Ovary (tissue), 10 donors: ENCODE measurements at regions of chr17 and their contacts with region 1.

Region 1: GRCh38 chr17:62911114-62911513 is 54.9 kb upstream of the TANC2 start:
- DNase-seq: no peak
- H3K4me3 ChIP-seq: no peak overlapping the region
- H3K27ac ChIP-seq: no peak overlapping the region
- H3K4me1 ChIP-seq: no peaks in the 10 kb centered on the region
- H3K27me3 ChIP-seq: no peaks in the 10 kb centered on the region
- CTCF ChIP-seq: no peak
- EP300 ChIP-seq: no peak
- POLR2A ChIP-seq: no peak

Region 2: DNA sequence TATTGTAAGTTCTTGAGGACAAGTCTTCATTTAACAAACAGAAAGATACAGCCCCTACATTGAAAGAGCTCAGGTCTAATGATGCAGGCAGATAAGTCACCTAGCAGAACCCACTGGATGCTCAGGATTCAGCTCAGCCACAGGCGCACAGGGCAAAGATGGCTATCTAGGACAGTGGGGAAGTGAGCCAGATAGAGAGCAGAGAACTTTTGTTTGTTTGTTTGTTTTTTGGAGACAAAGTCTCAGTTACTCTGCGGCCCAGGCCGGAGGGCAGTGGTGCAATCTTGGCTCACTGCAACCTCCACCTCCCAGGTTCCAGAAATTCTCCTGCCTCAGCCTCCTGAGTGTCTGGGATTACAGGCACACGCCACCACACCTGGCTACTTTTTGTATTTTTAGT is 467.1 kb before region 1 on chr17:
- intact Hi-C with region 1: loop called in 1 of 4 experiments (anchors 5 kb)
- DNase-seq: no peak
- H3K4me3 ChIP-seq: no peak overlapping the region
- H3K27ac ChIP-seq: no peak overlapping the region
- H3K4me1 ChIP-seq: no peaks in the 10 kb centered on the region
- H3K27me3 ChIP-seq: no peaks in the 10 kb centered on the region
- CTCF ChIP-seq: no peak
- EP300 ChIP-seq: no peak
- POLR2A ChIP-seq: no peak